CD8-positive, alpha-beta T cell (primary cell): ENCODE measurements at regions of chr4 and their contacts with region 1.

Region 1: DNA sequence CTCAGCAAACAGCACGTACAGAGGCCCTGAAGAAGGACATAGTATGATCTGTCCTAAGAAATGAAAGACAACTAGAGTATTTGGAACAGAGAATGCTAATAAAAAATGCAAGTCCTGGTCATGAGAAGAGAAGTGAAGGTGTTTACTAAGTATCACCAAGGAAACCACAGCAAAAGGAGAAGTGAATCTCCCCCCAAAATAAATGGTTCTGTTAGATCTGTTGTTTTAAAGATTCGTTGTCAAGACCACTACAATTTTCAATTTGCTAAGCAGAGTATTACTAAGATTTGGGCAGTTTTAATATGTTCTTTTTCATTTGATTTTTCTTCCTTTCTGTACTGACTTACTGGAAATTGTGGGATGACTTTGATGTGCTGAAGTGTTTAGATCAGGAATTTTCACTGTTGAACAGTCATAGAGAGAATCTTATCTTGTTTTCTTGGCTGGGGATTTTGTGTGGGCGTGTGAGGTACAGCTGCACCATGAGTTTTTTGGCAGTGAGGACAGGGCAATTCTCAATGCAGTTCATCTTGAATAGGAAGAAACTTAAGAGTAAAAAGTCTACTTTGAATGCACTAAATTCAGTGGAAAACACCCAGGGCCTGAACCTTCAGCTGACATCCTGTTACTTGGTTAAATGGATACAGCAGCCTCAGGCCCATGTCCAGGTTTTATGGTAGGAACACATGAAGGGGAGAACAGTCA is 132.2 kb downstream of the STIM2 start:
- DNase-seq: peak in 1 of 9 experiments; percentile 42
- ATAC-seq: peak; percentile 42
- H3K4me3 ChIP-seq: no peak overlapping the region
- H3K4me3 Mint-ChIP-seq: no peak overlapping the region
- H3K27ac ChIP-seq: peak overlapping the region in 1 of 2 experiments; percentile 13
- H3K27ac Mint-ChIP-seq: no peak overlapping the region
- H3K4me1 ChIP-seq: peaks cover 43% of the 10 kb centered on the region
- H3K4me1 Mint-ChIP-seq: peaks cover 26% of the 10 kb centered on the region
- H3K27me3 ChIP-seq: no peaks in the 10 kb centered on the region
- H3K27me3 Mint-ChIP-seq: no peaks in the 10 kb centered on the region
- CTCF ChIP-seq: no peak

Region 2: DNA sequence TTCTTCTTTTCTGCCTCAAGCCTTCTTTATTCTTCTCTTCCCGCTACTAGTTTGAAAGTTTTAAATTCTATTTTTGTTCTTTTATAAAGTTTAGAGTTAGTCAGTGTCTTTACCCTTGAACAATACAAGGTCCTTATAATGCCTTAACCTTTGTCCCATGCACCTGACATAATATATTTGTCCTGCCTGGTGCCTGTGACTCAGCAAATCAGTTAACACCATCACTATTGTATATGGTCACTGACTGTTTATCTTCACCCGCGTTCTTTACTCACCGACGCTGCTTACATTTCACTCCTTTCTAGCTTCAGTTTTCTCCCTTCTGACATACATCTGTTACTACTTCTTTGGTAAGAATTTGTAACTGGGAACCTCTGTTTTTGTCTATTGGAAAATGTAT is 1073.1 kb before region 1 on chr4:
- CTCF ChIA-PET with region 1: no interaction called
- POLR2A ChIA-PET with region 1: no interaction called
- intact Hi-C with region 1: loop called in 1 of 2 experiments (anchors 5 kb)
- DNase-seq: no peak
- ATAC-seq: no peak
- H3K4me3 ChIP-seq: no peak overlapping the region
- H3K4me3 Mint-ChIP-seq: no peak overlapping the region
- H3K27ac ChIP-seq: no peak overlapping the region
- H3K27ac Mint-ChIP-seq: no peak overlapping the region
- H3K4me1 ChIP-seq: peaks cover 7% of the 10 kb centered on the region
- H3K4me1 Mint-ChIP-seq: peaks cover 22% of the 10 kb centered on the region
- H3K27me3 ChIP-seq: no peaks in the 10 kb centered on the region
- H3K27me3 Mint-ChIP-seq: no peaks in the 10 kb centered on the region
- CTCF ChIP-seq: no peak

Region 3: DNA sequence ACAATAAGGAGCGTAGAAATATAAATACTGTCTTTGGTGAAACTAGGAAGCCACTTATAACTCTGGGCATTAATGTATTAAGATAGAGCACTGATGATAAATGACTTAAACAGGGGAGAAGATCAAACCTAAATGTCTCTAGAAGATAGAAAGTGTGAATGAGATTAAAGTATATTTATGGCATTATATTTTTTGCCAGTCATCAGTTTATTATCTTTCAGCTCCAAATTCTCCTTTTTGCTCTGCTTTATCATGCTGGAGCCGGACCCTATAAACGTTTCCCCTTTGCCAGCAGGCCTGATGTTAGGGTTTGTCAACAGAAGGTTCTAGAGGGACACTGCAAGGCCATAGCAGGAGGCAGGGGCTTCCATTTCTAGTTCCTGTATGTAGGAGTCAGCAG is 332.5 kb before region 1 on chr4:
- CTCF ChIA-PET with region 1: no interaction called
- POLR2A ChIA-PET with region 1: no interaction called
- intact Hi-C with region 1: no loop called
- DNase-seq: no peak
- ATAC-seq: no peak
- H3K4me3 ChIP-seq: no peak overlapping the region
- H3K4me3 Mint-ChIP-seq: no peak overlapping the region
- H3K27ac ChIP-seq: no peak overlapping the region
- H3K27ac Mint-ChIP-seq: no peak overlapping the region
- H3K4me1 ChIP-seq: no peaks in the 10 kb centered on the region
- H3K4me1 Mint-ChIP-seq: no peaks in the 10 kb centered on the region
- H3K27me3 ChIP-seq: no peaks in the 10 kb centered on the region
- H3K27me3 Mint-ChIP-seq: no peaks in the 10 kb centered on the region
- CTCF ChIP-seq: no peak